ENCODE measurements at regions of chr20 and their contacts with region 1.

Region 1: GRCh38 chr20:5797843-5798462 is 47.8 kb downstream of the SHLD1 start:
- DNase-seq: peak in 2 of 3 donors; percentile 63 to 80
- ATAC-seq: no peak
- H3K4me3 ChIP-seq: no peak overlapping the region
- H3K27ac ChIP-seq: no peak overlapping the region
- H3K4me1 ChIP-seq: no peaks in the 10 kb centered on the region
- H3K27me3 ChIP-seq: no peaks in the 10 kb centered on the region

Region 2: DNA sequence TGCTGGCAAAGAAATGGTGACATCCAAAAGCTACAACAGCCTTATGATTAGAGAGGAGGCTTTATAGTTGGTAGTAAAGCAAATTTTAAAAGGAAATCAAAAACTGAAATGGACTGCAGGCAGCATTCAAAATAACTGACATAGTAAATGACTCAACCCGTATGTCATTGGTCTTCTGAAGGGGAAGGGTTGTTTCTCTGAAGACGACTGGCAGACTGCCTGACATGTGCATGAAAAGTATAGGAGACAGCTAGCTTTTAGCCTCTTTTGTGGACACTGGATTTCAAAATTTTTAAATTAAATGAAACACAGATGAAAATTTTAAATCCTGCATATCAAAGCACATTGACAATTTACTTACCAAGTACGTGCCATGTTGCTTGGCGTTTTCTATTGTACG is 61.7 kb after region 1 on chr20:
- intact Hi-C with region 1: no loop called
- DNase-seq: no peak
- ATAC-seq: no peak
- H3K4me3 ChIP-seq: no peak overlapping the region
- H3K27ac ChIP-seq: no peak overlapping the region
- H3K4me1 ChIP-seq: peaks cover 18% of the 10 kb centered on the region
- H3K27me3 ChIP-seq: no peaks in the 10 kb centered on the region

Region 3: DNA sequence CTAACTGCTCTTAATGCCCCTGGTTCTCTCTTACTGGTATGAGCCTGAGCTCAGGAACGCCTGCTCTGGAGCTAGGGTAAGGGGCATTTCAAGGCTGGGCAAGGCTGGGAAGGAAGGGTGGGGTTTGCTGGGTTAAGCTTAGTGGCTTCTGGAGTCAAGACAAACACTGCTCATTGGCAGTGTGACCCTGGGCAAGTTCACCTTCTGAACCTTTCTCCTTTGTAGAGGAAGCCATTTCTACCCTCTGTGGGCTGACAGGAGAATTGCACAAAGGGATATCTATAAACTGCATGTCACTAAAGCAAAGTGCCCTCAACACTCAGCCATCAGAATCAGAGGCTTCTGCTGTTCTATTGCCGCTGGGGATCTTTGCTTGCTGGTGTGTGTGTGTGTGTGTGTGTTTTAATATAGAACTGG is 276.2 kb after region 1 on chr20:
- intact Hi-C with region 1: loop called in 1 of 4 experiments (anchors 10 kb)
- DNase-seq: no peak
- ATAC-seq: peak; percentile 69 to 77
- H3K4me3 ChIP-seq: no peak overlapping the region
- H3K27ac ChIP-seq: peak overlapping the region; percentile 91
- H3K4me1 ChIP-seq: no peaks in the 10 kb centered on the region
- H3K27me3 ChIP-seq: no peaks in the 10 kb centered on the region

Measured in right cardiac atrium (tissue), 5 donors.